Activated B cell treated with CpG ODN at 0.5 μM for 24 hours (primary cell): ENCODE measurements at regions of chr17 and their contacts with region 1.

Region 1: DNA sequence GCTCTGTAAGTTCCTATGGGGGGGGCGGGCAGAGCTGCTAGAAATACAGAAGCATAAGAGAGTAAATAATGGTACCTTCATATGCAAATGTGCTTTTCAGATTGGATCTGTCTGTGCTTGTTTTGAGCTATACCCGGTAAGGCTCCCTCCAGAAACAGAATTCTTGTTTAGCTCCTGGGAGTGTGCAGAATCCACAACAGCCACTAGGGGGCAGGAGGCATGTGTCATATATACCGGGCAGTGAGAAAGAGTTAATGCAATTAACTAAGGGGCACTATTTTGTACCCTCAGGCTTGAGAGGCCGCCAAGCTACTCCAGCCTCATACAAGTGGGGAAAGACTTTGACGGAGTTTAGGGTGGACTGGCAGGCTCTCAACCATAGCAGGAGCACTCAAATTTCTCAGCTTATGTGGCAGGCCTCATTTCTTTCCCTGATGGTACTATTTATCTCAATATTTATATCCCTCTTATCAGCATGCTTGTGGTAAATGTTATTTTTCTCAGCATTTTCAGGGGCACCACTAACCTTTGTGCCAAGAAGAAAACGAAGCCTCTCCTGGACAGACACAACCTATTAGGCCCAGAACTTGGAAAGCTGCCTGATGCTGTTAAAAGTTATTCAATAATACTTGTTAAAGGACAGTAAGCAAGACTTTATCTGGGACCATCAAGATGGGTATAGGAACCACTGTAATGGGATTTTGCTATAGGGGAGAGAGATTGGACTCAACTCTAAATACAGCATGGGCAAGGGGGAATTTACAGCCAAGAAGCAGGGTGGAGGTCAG is 10.7 kb upstream of the CENPV start:
- DNase-seq: peak; percentile 56
- ATAC-seq: peak; percentile 97
- H3K4me3 Mint-ChIP-seq: no peak overlapping the region
- H3K27ac Mint-ChIP-seq: no peak overlapping the region
- H3K4me1 Mint-ChIP-seq: peaks cover 4% of the 10 kb centered on the region
- H3K27me3 Mint-ChIP-seq: no peaks in the 10 kb centered on the region
- CTCF ChIP-seq: peak; percentile 95

Region 2: GRCh38 chr17:16353317-16354174 is 10.4 kb before region 1 on chr17 and contains the start of gene CENPV:
- CTCF ChIA-PET with region 1: interaction called, 36 read pairs
- POLR2A ChIA-PET with region 1: interaction called, 6 read pairs
- intact Hi-C with region 1: no loop called
- DNase-seq: peak; percentile 73
- ATAC-seq: peak; percentile 82
- H3K4me3 Mint-ChIP-seq: peak within 1 kb of the TSS; percentile 90
- H3K27ac Mint-ChIP-seq: peak within 1 kb of the TSS; percentile 71
- H3K4me1 Mint-ChIP-seq: peaks cover 18% of the 10 kb centered on the region
- H3K27me3 Mint-ChIP-seq: no peaks in the 10 kb centered on the region
- CTCF ChIP-seq: no peak
- total RNA-seq, gene CENPV: 24.0 and 25.7 TPM in 2 replicates

Region 3: DNA sequence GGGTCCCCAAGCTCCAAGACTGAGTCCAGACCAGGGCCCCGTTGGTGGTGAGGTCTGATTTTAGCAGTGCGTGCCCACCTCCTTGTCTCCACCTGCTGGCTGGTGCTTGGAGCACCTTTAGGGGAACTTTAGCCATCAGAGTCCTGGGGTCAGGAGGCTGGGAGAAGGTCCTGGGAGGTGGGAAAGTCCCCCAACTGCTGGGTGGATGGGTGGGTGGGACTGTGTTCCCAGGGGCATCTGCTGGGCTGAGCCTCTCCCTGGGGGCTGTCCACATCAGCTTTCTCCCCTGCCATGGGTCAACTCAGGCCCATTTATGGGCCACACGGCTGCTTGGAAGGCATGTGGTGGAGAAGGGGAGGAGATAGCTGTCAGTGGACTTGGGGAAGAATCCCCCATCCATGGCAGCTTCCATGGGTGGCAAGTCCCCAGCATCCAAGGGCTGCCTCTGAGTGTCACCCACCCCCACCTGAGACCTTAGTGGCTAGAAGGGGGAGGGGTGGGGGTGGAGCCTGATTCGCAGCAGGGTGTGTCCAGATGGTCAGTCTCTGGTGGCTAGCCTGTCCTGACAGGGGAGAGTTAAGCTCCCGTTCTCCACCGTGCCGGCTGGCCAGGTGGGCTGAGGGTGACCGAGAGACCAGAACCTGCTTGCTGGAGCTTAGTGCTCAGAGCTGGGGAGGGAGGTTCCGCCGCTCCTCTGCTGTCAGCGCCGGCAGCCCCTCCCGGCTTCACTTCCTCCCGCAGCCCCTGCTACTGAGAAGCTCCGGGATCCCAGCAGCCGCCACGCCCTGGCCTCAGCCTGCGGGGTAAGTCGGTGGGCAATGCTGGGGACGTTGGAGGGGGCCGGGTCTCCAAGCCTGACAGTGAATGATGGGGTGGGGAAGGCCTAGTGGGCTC is 51.3 kb after region 1 on chr17 and contains the start of gene TRPV2:
- CTCF ChIA-PET with region 1: interaction called, 64 read pairs
- POLR2A ChIA-PET with region 1: interaction called, 10 read pairs
- intact Hi-C with region 1: loop called (anchors 1 kb)
- DNase-seq: peak; percentile 51
- ATAC-seq: peak; percentile 41
- H3K4me3 Mint-ChIP-seq: peak within 1 kb of the TSS; percentile 95
- H3K27ac Mint-ChIP-seq: peak within 1 kb of the TSS; percentile 97
- H3K4me1 Mint-ChIP-seq: peaks cover 41% of the 10 kb centered on the region
- H3K27me3 Mint-ChIP-seq: no peaks in the 10 kb centered on the region
- CTCF ChIP-seq: no peak
- total RNA-seq, gene TRPV2: 58.3 and 65.8 TPM in 2 replicates

Region 4: DNA sequence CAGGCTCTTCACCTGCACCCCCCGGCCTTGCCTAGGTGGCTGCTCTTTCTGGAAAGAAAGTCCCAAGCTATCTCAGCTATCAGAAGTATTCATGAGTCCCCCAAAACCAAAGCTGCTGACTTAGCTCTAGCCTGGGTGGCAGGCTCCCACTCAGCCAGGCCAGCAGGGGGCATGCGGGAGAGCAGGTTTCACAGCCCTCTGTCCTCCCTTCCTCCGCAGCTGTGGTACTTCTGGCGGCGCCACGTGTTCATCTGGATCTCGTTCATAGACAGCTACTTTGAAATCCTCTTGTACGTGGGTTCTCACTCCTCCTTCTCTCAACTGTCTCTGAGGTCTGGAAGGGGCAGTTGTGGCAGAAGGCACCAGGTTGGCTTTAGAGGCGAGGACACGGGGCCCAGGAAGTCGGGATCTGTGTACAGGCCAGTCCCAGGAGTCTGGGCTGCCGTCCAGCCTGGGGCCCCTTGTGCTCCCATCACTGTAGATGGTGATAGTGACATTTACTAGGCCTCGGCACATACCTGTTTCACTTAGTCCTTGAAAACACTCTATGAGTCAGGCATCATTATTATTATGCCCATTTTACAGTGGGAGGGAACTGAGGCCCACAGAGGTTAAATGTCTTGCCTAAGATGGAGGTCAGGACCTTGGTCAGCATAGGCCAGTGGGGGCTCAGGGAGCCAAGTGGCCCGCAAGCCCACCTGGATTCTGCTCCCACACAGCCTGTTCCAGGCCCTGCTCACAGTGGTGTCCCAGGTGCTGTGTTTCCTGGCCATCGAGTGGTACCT is 64.3 kb after region 1 on chr17:
- CTCF ChIA-PET with region 1: interaction called, 17 read pairs
- POLR2A ChIA-PET with region 1: no interaction called
- intact Hi-C with region 1: no loop called
- DNase-seq: no peak
- ATAC-seq: peak; percentile 89
- H3K4me3 Mint-ChIP-seq: no peak overlapping the region
- H3K27ac Mint-ChIP-seq: peak overlapping the region; percentile 30
- H3K4me1 Mint-ChIP-seq: no peaks in the 10 kb centered on the region
- H3K27me3 Mint-ChIP-seq: no peaks in the 10 kb centered on the region
- CTCF ChIP-seq: no peak

Region 5: DNA sequence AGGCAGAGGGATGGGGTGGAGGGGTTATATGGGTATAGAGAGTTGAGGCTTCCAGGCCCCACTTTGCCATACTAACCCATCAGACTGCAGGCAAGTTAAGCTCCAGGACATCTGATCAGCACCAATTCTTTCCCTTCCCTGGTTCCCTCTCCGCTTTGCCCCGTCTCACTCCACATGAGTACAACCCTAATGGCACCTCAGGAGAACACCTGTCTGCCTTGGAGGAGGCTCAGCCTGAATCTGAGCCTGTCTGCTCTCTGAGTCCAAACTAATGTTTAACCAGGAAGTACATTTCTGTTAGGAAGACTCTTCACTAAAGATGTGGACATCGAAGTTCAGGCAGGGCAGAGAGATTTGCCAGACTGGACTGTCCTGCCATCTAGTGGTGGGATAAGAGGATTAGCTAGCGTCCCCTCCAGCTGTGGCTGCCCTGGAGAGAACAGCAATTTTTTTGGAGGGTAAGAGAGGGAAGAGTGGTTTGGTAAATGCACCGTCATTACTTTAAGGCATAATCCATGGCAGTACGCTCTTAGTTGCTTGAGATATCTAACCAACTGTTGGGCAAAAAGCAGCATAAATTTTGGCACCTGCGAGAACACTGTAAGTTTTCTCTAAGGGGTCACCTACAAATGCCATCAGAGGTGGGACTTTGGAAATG is 157.3 kb after region 1 on chr17:
- CTCF ChIA-PET with region 1: interaction called, 119 read pairs
- POLR2A ChIA-PET with region 1: no interaction called
- intact Hi-C with region 1: loop called (anchors 1 kb)
- DNase-seq: peak; percentile 19
- ATAC-seq: peak; percentile 94
- H3K4me3 Mint-ChIP-seq: no peak overlapping the region
- H3K27ac Mint-ChIP-seq: no peak overlapping the region
- H3K4me1 Mint-ChIP-seq: peaks cover 6% of the 10 kb centered on the region
- H3K27me3 Mint-ChIP-seq: peaks cover 36% of the 10 kb centered on the region
- CTCF ChIP-seq: peak; percentile 31

Region 6: DNA sequence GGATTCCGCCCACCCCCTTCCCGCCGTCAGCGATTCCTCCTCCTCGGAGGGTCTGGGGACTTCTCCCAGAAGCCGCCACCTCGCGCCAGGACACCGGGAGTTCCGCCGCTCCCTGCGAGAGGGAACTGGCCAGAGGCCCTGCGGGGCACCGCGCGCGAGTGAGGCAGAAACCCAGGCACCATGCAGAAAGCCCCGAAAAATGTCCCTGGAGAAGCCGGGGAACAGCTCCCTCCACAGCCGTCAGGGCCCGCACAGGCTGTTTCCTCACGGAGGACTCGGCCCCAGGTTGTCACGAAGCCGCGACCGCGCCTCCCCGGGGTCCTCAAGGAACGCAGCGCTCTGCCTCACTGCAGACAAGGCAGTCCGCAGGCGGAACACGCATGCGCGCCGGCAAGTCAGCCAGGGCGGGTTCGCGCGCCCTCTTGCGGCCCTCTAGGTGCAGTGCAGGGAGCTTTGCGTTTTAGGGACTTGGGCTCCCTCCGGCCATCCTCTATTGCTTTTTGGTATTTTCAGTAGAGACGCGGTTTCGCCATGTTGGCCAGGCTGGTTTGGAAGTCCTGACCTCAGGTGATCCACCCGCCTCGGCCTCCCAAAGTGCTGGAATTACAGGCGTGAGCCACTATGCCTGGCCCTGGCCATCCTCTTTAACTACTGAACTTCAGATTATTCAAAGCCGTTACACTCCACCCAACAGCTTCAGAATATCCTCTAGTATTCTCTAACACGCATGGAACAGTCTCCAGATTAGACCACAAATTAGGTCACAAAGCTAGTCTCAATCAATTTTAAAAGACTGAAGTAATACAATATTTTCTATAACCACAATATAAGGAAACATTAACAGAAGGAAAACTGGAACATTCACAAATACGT is 225.4 kb after region 1 on chr17:
- CTCF ChIA-PET with region 1: interaction called, 5 read pairs
- POLR2A ChIA-PET with region 1: no interaction called
- intact Hi-C with region 1: loop called (anchors 1 kb)
- DNase-seq: peak; percentile 89
- ATAC-seq: peak; percentile 97
- H3K4me3 Mint-ChIP-seq: peak overlapping the region; percentile 74
- H3K27ac Mint-ChIP-seq: no peak overlapping the region
- H3K4me1 Mint-ChIP-seq: peaks cover 5% of the 10 kb centered on the region
- H3K27me3 Mint-ChIP-seq: peaks cover 40% of the 10 kb centered on the region
- CTCF ChIP-seq: peak; percentile 75